GM18951 (cell line): ENCODE measurements at regions of chr17 and their contacts with region 1.

Region 1: GRCh38 chr17:33927732-33928133 is 327.4 kb upstream of the CCL2 start:
- POLR2A ChIP-seq: no peak

Region 2: DNA sequence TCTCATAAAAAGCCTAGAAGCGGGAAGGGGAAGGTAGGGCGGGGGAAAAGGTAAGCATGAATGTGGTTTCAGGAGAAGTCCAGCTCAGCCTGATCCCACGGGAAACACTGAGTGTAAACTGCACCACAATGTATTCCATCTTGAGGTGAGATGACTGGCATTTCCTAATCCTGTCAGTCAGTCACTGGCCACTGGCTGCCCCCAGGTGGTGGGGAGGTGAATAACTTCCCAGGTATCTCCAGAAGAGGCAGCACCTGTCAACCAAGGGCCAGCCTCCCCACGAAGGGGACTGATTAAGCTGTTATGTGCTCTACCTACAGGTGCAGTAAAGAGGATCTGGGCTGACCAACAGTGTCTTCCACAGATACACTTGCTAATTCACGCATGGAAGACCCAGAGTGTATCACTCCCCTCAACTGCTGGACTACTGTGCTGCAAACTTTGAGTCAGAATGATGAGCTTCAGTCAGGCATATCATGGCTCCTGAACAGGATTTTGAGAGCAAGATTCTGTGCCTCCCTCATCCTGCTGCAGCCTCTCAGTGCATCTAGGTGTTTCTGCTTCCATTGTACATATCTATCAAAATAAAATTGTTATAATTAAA is 218.8 kb after region 1 on chr17:
- in situ Hi-C with region 1: loop called (anchors 25 kb)
- POLR2A ChIP-seq: no peak